Naive thymus-derived CD4-positive, alpha-beta T cell (primary cell): ENCODE measurements at regions of chr5 and their contacts with region 1.

Region 1: GRCh38 chr5:56270568-56271392 is 37.6 kb upstream of the ANKRD55 start:
- DNase-seq: peak; percentile 47 to 73 (median 68)
- ATAC-seq: peak; percentile 97
- H3K4me3 ChIP-seq: no peak overlapping the region
- H3K4me3 Mint-ChIP-seq: peak overlapping the region; percentile 37 to 88 (median 76)
- H3K27ac ChIP-seq: no peak overlapping the region
- H3K27ac Mint-ChIP-seq: peak overlapping the region in 7 of 9 donors; percentile 44 to 86 (median 67)
- H3K4me1 ChIP-seq: peaks cover 0 to 9% of the 10 kb centered on the region in 2 donors
- H3K4me1 Mint-ChIP-seq: peaks cover 12 to 33% (median 21%) of the 10 kb centered on the region in 7 donors
- H3K27me3 ChIP-seq: no peaks in the 10 kb centered on the region
- H3K27me3 Mint-ChIP-seq: peaks cover 0 to 6% (median 0%) of the 10 kb centered on the region in 5 donors

Region 2: GRCh38 chr5:55936100-55936693 is 334.6 kb before region 1 on chr5:
- CTCF ChIA-PET with region 1: interaction called, 6 read pairs
- POLR2A ChIA-PET with region 1: interaction called, 3 read pairs
- intact Hi-C with region 1: loop called (anchors 1 kb)
- DNase-seq: peak; percentile 44 to 73 (median 66)
- ATAC-seq: peak; percentile 91
- H3K4me3 ChIP-seq: no peak overlapping the region
- H3K4me3 Mint-ChIP-seq: no peak overlapping the region
- H3K27ac ChIP-seq: no peak overlapping the region
- H3K27ac Mint-ChIP-seq: peak overlapping the region in 6 of 9 donors; percentile 11 to 84 (median 38)
- H3K4me1 ChIP-seq: no peaks in the 10 kb centered on the region
- H3K4me1 Mint-ChIP-seq: peaks cover 0 to 35% (median 14%) of the 10 kb centered on the region in 7 donors
- H3K27me3 ChIP-seq: no peaks in the 10 kb centered on the region
- H3K27me3 Mint-ChIP-seq: no peaks in the 10 kb centered on the region

Region 3: DNA sequence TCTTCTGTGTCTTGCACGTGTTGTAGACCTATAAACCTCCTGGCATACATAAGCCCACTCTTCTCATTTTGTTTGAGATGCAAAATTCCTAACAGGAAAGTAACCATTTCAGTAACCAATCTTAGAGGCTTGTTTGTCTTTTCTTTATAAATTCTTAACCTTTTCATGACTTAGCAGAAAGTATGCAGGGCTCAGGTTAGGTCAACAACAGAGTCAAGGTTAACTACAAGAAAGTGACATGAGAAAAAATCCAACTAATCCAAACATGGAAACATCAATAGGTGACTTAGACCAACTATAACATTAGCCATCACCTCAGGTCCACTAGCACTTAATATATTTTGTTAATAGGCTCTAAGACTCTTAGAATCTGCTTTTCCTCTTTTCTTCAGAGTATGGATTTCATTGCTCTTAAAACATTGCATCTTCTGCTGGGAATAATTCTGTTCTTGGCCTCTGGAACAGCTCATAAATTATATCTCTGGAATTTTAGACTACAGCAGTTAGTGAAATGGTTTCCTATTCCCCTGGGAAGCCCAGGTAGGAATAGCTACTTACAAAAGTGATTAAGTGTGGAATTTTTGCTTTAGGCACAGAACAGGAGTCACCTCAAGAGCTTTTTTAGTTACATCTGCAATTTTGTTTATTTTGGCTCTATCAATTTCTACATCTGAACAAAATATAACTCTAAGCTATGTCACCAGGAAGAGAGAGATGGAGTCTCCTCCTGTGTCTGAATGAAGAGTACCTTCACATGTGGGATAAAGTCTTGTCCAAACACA is 117.6 kb after region 1 on chr5:
- CTCF ChIA-PET with region 1: interaction called, 7 read pairs
- POLR2A ChIA-PET with region 1: no interaction called
- intact Hi-C with region 1: loop called in 1 of 2 experiments (anchors 2 kb)
- DNase-seq: no peak
- ATAC-seq: no peak
- H3K4me3 ChIP-seq: no peak overlapping the region
- H3K4me3 Mint-ChIP-seq: no peak overlapping the region
- H3K27ac ChIP-seq: no peak overlapping the region
- H3K27ac Mint-ChIP-seq: no peak overlapping the region
- H3K4me1 ChIP-seq: no peaks in the 10 kb centered on the region
- H3K4me1 Mint-ChIP-seq: peaks cover 0 to 8% (median 0%) of the 10 kb centered on the region in 7 donors
- H3K27me3 ChIP-seq: no peaks in the 10 kb centered on the region
- H3K27me3 Mint-ChIP-seq: peaks cover 0 to 6% (median 0%) of the 10 kb centered on the region in 5 donors

Region 4: DNA sequence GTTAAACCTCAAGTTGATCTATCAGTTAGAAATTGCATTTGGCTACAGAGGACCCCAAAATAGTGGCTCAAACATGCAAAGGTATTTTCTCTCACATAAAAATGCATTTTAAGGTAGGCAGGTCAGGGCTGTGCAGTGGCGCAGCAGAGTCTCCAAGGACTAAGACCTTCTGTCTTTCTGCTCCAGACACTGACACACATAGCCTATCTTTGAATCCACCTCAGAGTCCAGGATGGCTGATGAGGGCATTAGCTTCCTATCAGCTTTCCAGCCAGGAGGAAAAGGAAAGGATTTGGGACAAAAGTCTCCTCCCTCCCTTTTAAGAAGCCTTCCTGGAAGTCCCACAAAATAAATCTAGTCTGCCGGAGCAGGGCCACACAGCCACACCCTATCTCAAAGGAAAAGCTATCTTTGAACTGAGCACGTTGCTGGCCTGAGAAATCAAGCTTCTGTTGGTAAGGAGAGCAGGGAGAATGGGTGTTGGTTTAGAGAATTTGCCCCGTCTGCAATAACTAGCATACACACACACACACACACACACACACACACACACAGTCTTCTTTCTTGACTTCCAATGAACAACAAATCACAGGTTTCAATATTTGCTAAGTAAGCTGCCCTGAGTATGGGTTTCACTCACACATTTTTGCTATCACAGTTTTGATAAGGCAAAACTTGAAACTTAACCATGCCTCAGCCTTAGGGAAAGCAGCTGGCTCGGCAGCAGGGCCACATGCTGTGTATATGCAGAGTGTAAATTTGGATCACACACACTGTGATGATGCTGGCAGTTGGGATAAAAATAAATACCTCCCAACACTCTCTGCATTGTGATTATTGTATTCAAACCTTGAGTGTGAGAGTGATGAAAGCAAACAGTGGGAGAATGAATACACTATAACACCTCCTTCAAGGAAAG is 427.9 kb after region 1 on chr5:
- CTCF ChIA-PET with region 1: no interaction called
- POLR2A ChIA-PET with region 1: no interaction called
- intact Hi-C with region 1: loop called in 1 of 2 experiments (anchors 10 kb)
- DNase-seq: no peak
- ATAC-seq: no peak
- H3K4me3 ChIP-seq: no peak overlapping the region
- H3K4me3 Mint-ChIP-seq: peak overlapping the region in 8 of 10 donors; percentile 33 to 70 (median 54)
- H3K27ac ChIP-seq: peak overlapping the region; percentile 25
- H3K27ac Mint-ChIP-seq: peak overlapping the region; percentile 4 to 87 (median 69)
- H3K4me1 ChIP-seq: peaks cover 12 to 60% of the 10 kb centered on the region in 2 donors
- H3K4me1 Mint-ChIP-seq: peaks cover 47 to 99% (median 80%) of the 10 kb centered on the region in 7 donors
- H3K27me3 ChIP-seq: no peaks in the 10 kb centered on the region
- H3K27me3 Mint-ChIP-seq: peaks cover 0 to 6% (median 0%) of the 10 kb centered on the region in 5 donors

Region 5: GRCh38 chr5:56852228-56853000 is 581.6 kb after region 1 on chr5:
- CTCF ChIA-PET with region 1: interaction called, 4 read pairs
- POLR2A ChIA-PET with region 1: no interaction called
- intact Hi-C with region 1: loop called (anchors 1 to 5 kb)
- DNase-seq: no peak
- ATAC-seq: peak; percentile 48
- H3K4me3 ChIP-seq: no peak overlapping the region
- H3K4me3 Mint-ChIP-seq: peak overlapping the region; percentile 46 to 73 (median 66)
- H3K27ac ChIP-seq: no peak overlapping the region
- H3K27ac Mint-ChIP-seq: peak overlapping the region; percentile 19 to 89 (median 64)
- H3K4me1 ChIP-seq: peaks cover 40 to 72% of the 10 kb centered on the region in 2 donors
- H3K4me1 Mint-ChIP-seq: peaks cover 71 to 98% (median 90%) of the 10 kb centered on the region in 7 donors
- H3K27me3 ChIP-seq: no peaks in the 10 kb centered on the region
- H3K27me3 Mint-ChIP-seq: no peaks in the 10 kb centered on the region

Region 6: GRCh38 chr5:57221049-57221568 is 950.3 kb after region 1 on chr5:
- CTCF ChIA-PET with region 1: interaction called, 5 read pairs
- POLR2A ChIA-PET with region 1: interaction called, 4 read pairs
- intact Hi-C with region 1: loop called (anchors 1 kb)
- DNase-seq: peak in 7 of 9 donors; percentile 41 to 79 (median 73)
- ATAC-seq: peak; percentile 86
- H3K4me3 ChIP-seq: no peak overlapping the region
- H3K4me3 Mint-ChIP-seq: peak overlapping the region in 1 of 10 donors; percentile 30
- H3K27ac ChIP-seq: no peak overlapping the region
- H3K27ac Mint-ChIP-seq: peak overlapping the region in 8 of 9 donors; percentile 19 to 87 (median 76)
- H3K4me1 ChIP-seq: peaks cover 4 to 7% of the 10 kb centered on the region in 2 donors
- H3K4me1 Mint-ChIP-seq: peaks cover 3 to 62% (median 41%) of the 10 kb centered on the region in 7 donors
- H3K27me3 ChIP-seq: no peaks in the 10 kb centered on the region
- H3K27me3 Mint-ChIP-seq: no peaks in the 10 kb centered on the region